ENCODE measurements at regions of chr17 and their contacts with region 1.

Region 1: GRCh38 chr17:63419949-63420867 is 25.9 kb downstream of the CYB561 start:
- DNase-seq: no peak
- ATAC-seq: no peak
- H3K4me3 ChIP-seq: no peak overlapping the region
- H3K27ac ChIP-seq: no peak overlapping the region
- H3K4me1 ChIP-seq: no peaks in the 10 kb centered on the region
- H3K27me3 ChIP-seq: no peaks in the 10 kb centered on the region
- CTCF ChIP-seq: no peak
- POLR2A ChIP-seq: no peak

Region 2: DNA sequence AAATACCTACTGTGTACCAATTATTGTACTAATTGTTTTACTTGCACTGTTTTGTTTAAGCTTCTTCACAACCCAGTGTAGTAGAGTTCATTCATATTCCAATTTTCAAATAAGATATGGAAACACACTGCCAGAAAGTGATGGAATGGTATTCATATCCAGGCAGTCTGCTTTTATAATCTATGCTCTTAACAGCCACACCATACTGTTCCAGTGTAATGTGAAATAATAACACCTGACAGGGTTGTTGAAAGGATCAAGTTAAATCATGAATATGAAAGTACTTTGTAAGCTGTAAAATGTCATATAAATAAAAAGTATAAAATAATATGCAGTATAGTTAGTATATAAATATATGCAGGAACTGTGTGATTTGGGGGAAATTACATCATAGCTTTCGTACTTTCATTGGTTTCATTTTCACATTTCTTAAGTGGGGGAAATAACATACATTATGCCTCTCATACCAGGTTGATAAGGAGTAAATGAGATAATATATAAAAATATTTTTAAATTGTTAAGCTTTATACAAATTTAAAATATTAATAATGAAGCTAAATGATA is 223.4 kb before region 1 on chr17:
- intact Hi-C with region 1: no loop called
- DNase-seq: no peak
- ATAC-seq: no peak
- H3K4me3 ChIP-seq: no peak overlapping the region
- H3K27ac ChIP-seq: no peak overlapping the region
- H3K4me1 ChIP-seq: no peaks in the 10 kb centered on the region
- H3K27me3 ChIP-seq: no peaks in the 10 kb centered on the region
- CTCF ChIP-seq: no peak
- POLR2A ChIP-seq: no peak

Region 3: GRCh38 chr17:63290784-63291183 is 129.4 kb before region 1 on chr17:
- intact Hi-C with region 1: no loop called
- DNase-seq: no peak
- ATAC-seq: no peak
- H3K4me3 ChIP-seq: no peak overlapping the region
- H3K27ac ChIP-seq: no peak overlapping the region
- H3K4me1 ChIP-seq: no peaks in the 10 kb centered on the region
- H3K27me3 ChIP-seq: no peaks in the 10 kb centered on the region
- CTCF ChIP-seq: no peak
- POLR2A ChIP-seq: no peak

Region 4: DNA sequence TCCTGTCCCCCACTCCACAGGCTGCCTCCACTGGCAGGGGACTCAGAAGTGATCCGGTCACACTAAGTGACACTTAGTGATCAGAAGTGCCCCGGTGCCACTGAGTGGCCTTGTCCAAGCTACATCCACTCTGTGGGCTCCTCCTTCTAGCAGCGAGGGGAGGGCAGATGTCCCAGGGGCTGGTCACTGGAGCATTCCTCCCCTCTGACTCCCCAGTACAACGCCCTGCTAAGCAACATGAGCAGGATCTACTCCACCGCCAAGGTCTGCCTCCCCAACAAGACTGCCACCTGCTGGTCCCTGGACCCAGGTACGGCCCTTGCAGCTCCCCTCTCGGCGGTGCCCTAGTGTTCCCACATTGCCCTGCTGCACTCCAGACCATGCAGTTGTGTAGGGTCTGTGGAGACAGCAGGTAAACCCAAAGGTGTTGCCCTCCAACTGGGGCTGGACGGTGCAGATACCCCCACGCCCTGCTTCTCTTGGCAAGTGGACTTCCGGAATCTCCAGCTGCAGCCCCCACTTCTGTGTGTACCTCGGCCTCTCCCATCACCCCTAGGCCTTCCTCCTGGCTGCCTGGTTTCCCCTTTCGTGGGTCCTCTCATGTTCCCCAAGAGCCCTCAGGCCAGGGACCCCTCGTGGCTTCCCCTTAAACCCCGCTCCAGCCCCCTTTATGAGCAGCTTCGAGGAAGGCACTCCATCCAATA is 58.7 kb after region 1 on chr17:
- intact Hi-C with region 1: loop called (anchors 5 kb)
- DNase-seq: peak; percentile 86 to 88 (median 88)
- ATAC-seq: peak; percentile 75
- H3K4me3 ChIP-seq: no peak overlapping the region
- H3K27ac ChIP-seq: no peak overlapping the region
- H3K4me1 ChIP-seq: peaks cover 42% of the 10 kb centered on the region
- H3K27me3 ChIP-seq: no peaks in the 10 kb centered on the region
- CTCF ChIP-seq: peak; percentile 72 to 93 (median 88)
- POLR2A ChIP-seq: no peak

Region 5: DNA sequence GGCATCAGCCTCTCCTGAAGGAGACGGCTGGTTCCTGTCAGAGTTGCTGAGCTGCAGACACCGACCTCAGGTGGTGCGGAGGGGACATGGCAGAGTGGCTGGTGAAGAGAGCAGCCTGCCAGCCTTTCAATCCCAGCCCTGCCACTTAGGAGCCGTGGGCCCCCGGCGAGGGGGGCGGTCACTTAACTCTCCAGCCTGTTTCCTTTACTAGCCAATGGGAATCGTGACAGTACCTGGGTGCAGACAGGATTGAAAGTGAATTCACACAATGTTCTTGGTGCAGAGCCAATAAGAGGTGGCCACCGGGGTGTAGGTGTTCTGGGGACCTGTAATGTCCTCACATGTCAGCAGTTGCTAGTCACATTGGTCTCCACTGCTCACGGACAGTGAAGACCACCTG is 70.1 kb after region 1 on chr17:
- intact Hi-C with region 1: no loop called
- DNase-seq: peak in 2 of 4 donors; percentile 19 to 31
- ATAC-seq: no peak
- H3K4me3 ChIP-seq: no peak overlapping the region
- H3K27ac ChIP-seq: no peak overlapping the region
- H3K4me1 ChIP-seq: peaks cover 5% of the 10 kb centered on the region
- H3K27me3 ChIP-seq: no peaks in the 10 kb centered on the region
- CTCF ChIP-seq: no peak
- POLR2A ChIP-seq: no peak

Measured in body of pancreas (tissue), 4 donors.